Ascending aorta (tissue), 2 donors: ENCODE measurements at regions of chr21 and their contacts with region 1.

Region 1: GRCh38 chr21:35051287-35051818 is 2.3 kb upstream of the RUNX1 start:
- DNase-seq: peak; percentile 55 to 88
- H3K4me3 ChIP-seq: no peak overlapping the region
- H3K27ac ChIP-seq: peak overlapping the region; percentile 81 to 84
- H3K4me1 ChIP-seq: peaks cover 15 to 49% of the 10 kb centered on the region in 2 donors
- H3K27me3 ChIP-seq: no peaks in the 10 kb centered on the region
- CTCF ChIP-seq: peak; percentile 5 to 39 (median 37)

Region 2: DNA sequence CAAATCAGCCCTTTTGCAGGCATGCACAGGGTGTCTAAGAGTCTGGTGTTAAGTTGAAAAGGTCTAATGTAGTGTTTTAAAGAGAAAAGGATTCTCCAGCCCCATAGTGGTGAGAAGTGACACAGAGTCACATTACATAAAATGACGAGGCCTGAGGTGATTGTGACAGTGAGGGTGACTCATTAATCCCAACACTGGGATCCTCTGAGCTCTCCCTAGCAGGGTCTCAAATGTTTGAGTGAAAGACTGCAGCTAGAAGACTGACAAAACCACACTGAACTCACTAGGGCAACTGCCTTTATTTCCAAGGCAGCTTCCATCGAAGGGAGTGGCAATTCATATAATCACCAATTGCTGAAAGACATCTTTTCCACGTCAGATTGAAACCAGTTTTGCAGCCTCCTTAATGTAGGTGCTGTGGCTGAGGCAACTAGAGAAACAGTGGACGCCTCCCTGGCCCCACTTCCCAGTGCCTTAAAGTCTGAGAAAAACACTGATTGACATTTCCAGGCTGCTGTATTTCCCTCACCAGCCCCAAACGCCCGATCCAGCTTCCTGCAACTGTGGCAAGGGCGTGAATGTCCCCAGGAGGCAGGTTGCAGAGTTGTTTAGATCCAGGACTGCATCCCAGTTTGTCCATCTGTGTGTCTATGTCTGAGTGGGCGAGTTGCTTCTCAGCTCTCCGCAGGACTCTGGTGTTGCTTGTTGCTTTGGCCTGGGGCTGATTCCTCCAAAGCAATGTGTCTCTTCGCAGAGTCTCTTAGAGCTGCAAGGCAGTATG is 83.7 kb before region 1 on chr21:
- intact Hi-C with region 1: no loop called
- DNase-seq: no peak
- H3K4me3 ChIP-seq: no peak overlapping the region
- H3K27ac ChIP-seq: no peak overlapping the region
- H3K4me1 ChIP-seq: no peaks in the 10 kb centered on the region
- H3K27me3 ChIP-seq: no peaks in the 10 kb centered on the region
- CTCF ChIP-seq: no peak

Region 3: DNA sequence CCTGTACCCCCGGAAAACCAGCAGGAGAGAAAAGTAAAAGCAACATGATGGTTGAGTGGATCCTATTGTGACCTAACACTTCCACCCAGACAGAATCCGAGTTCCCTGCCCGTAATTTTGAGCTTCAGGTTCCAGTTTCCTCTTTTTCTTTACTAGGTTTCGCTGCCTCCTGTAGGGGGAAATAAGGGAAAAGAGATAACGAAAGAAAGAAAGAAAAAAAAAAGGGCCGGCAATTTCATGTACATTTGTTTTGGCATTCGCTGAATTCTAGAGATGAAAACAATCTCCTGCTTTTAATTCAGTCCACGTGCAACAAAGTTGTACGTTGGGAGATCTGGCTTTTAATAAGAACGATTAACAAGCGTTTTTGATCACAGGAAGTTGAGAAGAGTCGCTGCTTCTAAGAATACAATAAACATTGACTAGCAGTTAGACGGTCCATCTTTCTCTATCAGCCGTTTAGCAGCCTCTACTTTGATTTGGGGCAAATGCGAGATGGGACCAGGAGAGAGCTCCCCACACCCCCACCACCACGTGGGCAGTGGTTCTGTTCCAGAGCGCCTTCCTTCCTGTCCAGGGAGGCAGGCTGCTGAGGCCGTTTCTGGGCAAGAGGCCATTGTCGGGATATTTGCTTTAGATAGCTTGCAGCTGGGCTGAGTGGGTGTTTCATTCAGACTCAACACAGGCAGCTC is 153.6 kb after region 1 on chr21:
- intact Hi-C with region 1: loop called (anchors 5 kb)
- DNase-seq: peak in 1 of 2 donors; percentile 82
- H3K4me3 ChIP-seq: peak overlapping the region; percentile 4 to 50
- H3K27ac ChIP-seq: peak overlapping the region; percentile 70 to 72
- H3K4me1 ChIP-seq: peaks cover 4 to 30% of the 10 kb centered on the region in 2 donors
- H3K27me3 ChIP-seq: no peaks in the 10 kb centered on the region
- CTCF ChIP-seq: no peak

Region 4: DNA sequence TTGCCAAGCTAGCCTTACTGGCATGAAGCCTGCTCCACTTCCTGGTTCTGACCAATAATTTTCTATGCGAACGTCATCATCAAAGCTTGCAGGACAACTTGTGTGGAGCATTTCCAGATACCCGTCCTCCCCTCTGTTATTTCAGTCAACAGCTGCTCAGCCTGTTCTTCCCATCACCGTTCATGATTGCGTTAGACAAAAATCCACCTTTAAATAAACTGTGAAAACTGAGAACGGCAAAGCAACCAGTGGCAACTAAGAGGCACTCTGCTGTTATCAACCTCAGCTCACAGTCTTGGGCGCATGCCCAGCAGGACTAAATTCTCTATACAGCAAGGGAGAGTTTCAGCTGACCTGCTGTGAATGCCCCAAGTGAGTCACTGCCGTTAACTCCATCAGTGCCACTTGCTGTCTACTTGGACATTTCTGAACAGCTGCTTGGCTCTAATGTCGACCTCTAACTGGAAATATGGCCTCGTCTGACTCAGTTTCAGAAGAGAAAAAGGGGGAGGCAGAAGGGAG is 205.2 kb after region 1 on chr21:
- intact Hi-C with region 1: no loop called
- DNase-seq: peak; percentile 33 to 89
- H3K4me3 ChIP-seq: peak overlapping the region; percentile 25 to 42
- H3K27ac ChIP-seq: peak overlapping the region in 1 of 2 donors; percentile 52
- H3K4me1 ChIP-seq: peaks cover 0 to 15% of the 10 kb centered on the region in 2 donors
- H3K27me3 ChIP-seq: no peaks in the 10 kb centered on the region
- CTCF ChIP-seq: no peak

Region 5: DNA sequence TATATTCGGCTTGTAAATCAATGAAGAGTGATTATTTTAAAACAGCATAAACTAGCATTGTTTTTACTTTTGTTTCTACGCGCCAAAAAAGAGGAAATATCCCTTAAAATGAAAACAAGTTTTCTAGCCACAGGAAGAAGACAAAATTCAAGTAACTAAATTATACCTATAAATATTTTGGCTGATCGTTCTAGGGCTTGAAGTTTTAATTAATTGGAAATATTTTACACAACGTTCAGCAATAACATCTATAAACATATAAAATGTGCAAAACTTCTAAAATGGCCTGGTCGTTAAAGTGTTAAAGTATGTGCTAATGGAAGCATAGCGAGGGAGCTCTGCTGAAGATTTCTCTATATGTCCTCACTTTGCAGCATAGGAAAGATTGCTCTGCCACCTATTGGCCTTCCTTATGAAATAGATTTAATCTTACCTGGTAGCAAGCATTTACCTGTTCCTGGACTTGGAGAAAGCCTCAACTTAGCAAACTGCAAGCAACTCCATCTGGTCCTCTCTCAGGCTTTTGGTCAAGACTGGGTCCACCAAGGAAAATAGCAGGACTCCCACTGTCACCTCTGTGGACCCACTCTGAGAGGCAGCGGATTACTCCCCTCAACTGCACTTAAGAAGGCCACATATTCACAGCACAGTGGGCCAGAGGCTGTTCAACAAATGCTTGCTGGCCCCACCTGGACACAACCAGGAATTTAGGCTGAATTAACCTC is 349.0 kb after region 1 on chr21:
- intact Hi-C with region 1: loop called (anchors 10 kb)
- DNase-seq: no peak
- H3K4me3 ChIP-seq: no peak overlapping the region
- H3K27ac ChIP-seq: no peak overlapping the region
- H3K4me1 ChIP-seq: no peaks in the 10 kb centered on the region
- H3K27me3 ChIP-seq: no peaks in the 10 kb centered on the region
- CTCF ChIP-seq: peak in 2 of 3 experiments; percentile 37 to 48

Region 6: DNA sequence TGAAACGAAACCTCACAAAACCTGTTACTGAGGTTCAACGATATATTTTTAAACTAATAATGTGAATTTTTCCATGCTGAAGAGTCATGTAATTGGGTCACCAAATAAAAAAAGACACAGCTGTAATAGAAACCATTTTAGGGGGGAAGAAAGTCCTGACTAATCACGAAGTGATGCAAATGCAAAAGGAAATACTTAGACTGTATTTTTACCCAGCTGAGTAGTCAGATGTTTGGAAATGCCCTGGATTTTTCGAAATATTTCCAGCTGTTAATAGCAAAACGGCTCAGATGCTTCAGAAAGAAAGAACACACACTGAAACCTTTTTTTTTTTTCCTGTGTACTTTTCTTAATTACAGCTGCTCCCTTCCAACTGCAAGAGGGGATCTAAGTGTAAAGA is 798.7 kb after region 1 on chr21:
- intact Hi-C with region 1: loop called (anchors 10 kb)
- DNase-seq: no peak
- H3K4me3 ChIP-seq: peak overlapping the region; percentile 12 to 46
- H3K27ac ChIP-seq: peak overlapping the region; percentile 81 to 88
- H3K4me1 ChIP-seq: peaks cover 0 to 19% of the 10 kb centered on the region in 2 donors
- H3K27me3 ChIP-seq: no peaks in the 10 kb centered on the region
- CTCF ChIP-seq: no peak